ENCODE measurements at regions of chr1 and their contacts with region 1.

Region 1: DNA sequence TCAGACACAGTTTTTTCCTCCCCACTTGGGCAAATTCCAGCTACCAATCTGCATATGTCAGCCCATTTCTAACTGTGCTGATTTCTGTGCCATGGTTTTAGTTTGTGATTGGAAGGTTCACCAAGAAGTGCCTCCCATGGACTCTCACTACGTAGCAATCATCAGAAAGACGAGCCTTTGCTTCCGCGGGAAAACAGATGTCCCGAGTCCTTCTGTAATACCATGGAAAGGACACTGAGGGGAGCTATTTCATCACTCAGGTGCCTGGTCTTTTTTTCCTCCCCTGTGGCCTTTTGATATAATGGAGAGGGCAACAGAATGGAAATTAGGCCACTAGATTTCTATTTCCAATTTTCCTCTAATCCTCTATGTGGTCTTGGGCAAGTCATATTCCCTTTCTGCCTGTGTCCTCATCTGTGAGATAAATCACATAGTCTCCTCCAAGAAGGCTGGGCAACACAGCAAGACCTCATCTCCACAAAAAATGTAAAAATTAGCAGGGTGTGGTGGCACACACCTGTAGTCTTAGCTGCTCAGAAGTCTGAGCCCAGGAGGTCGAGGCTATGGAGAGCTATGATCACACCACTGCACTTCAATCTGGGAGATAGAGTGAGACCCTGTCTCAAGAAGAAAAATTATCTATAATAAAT is 24.8 kb downstream of the LEMD1 start:
- DNase-seq: peak; percentile 87
- H3K4me3 Mint-ChIP-seq: no peak overlapping the region
- H3K27ac Mint-ChIP-seq: no peak overlapping the region
- H3K4me1 Mint-ChIP-seq: peaks cover 4% of the 10 kb centered on the region
- H3K27me3 Mint-ChIP-seq: peaks cover 27% of the 10 kb centered on the region
- CTCF ChIP-seq: peak; percentile 99

Region 2: DNA sequence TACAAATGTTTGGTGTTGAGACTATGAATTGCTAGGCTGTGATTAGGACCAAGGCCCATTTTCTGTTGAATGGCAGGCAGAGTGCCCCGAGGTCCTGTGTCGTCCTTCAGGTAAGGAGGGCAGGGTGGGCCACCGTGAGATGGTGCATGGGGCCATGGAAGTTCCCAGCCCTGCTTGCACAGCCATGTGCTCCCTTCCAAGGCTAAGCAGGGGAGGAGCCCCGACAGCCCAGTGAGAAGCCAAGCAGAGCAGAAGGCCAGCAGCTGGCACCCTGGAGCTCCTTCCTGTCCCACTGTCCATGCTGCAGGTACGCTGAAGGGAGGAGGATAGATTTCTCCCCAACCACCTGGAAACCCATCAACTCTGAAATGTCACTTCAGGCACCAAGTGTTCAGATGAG is 67.4 kb before region 1 on chr1:
- CTCF ChIA-PET with region 1: interaction called, 29 read pairs
- POLR2A ChIA-PET with region 1: no interaction called
- intact Hi-C with region 1: no loop called
- DNase-seq: no peak
- H3K4me3 Mint-ChIP-seq: no peak overlapping the region
- H3K27ac Mint-ChIP-seq: no peak overlapping the region
- H3K4me1 Mint-ChIP-seq: peaks cover 12% of the 10 kb centered on the region
- H3K27me3 Mint-ChIP-seq: peaks cover 47% of the 10 kb centered on the region
- CTCF ChIP-seq: no peak

Region 3: GRCh38 chr1:205382561-205382960 is 14.5 kb before region 1 on chr1:
- CTCF ChIA-PET with region 1: interaction called, 24 read pairs
- POLR2A ChIA-PET with region 1: interaction called, 7 read pairs
- intact Hi-C with region 1: no loop called
- DNase-seq: no peak
- H3K4me3 Mint-ChIP-seq: no peak overlapping the region
- H3K27ac Mint-ChIP-seq: no peak overlapping the region
- H3K4me1 Mint-ChIP-seq: no peaks in the 10 kb centered on the region
- H3K27me3 Mint-ChIP-seq: no peaks in the 10 kb centered on the region
- CTCF ChIP-seq: no peak

Region 4: GRCh38 chr1:205422993-205423625 is 26.0 kb after region 1 on chr1:
- CTCF ChIA-PET with region 1: interaction called, 10 read pairs
- POLR2A ChIA-PET with region 1: no interaction called
- intact Hi-C with region 1: no loop called
- DNase-seq: no peak
- H3K4me3 Mint-ChIP-seq: no peak overlapping the region
- H3K27ac Mint-ChIP-seq: no peak overlapping the region
- H3K4me1 Mint-ChIP-seq: no peaks in the 10 kb centered on the region
- H3K27me3 Mint-ChIP-seq: peaks cover 67% of the 10 kb centered on the region
- CTCF ChIP-seq: peak; percentile 49

Region 5: GRCh38 chr1:205477759-205478247 is 80.7 kb after region 1 on chr1:
- CTCF ChIA-PET with region 1: interaction called, 207 read pairs
- POLR2A ChIA-PET with region 1: interaction called, 6 read pairs
- intact Hi-C with region 1: no loop called
- DNase-seq: peak; percentile 100
- H3K4me3 Mint-ChIP-seq: no peak overlapping the region
- H3K27ac Mint-ChIP-seq: peak overlapping the region; percentile 33
- H3K4me1 Mint-ChIP-seq: peaks cover 15% of the 10 kb centered on the region
- H3K27me3 Mint-ChIP-seq: peaks cover 40% of the 10 kb centered on the region
- CTCF ChIP-seq: no peak